ENCODE measurements at regions of chrX and their contacts with region 1.

Region 1: DNA sequence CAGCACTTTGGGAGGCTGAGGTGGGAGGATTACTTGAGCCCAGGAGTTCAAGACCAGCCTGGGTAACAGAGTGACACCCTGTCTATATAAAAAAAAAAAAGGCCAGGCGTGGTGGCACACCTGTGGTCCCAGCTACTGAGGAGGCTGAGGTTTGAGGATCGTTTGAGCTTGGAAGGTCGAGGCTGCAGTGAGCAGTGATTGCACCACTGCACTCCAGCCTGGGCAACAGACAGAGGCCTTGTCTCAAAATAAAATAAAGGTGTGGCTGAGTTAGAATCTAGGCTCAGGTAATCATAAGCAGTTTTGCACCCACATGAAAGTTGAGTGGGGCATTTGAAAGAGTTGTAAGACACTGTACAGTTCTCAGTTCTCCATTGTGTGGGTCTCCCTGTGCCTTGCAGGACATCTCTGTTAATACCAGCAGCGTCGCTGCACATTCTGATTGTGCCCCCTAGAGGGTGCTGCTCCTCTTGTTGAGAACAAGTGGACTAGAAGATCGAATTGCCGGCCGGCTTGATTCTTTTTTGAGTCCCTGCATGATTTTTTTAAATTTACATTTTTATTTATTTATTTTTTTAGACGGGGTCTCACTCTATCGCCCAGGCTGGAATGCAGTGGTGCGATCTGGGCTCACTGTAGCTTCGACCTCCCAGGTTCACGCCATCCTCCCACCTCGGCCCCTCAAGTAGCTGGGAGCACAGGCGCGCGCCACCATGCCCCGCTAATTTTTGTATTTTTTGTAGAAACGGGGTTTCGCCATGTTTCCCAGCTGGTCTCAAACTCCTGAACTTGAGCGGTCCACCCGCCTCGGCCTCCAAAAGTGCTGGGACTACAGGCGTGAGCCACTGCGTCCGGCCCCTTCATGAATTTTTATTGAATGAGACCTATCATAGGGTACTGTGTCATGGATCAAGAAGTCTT is 73.6 kb upstream of the RBMX start:
- DNase-seq: no peak
- H3K4me3 ChIP-seq: no peak overlapping the region
- H3K27ac ChIP-seq: no peak overlapping the region
- H3K4me1 ChIP-seq: no peaks in the 10 kb centered on the region
- H3K27me3 ChIP-seq: peaks cover 0 to 3% (median 0%) of the 10 kb centered on the region in 4 donors
- CTCF ChIP-seq: peak; percentile 35 to 62 (median 50)
- EP300 ChIP-seq: no peak
- POLR2A ChIP-seq: no peak

Region 2: GRCh38 chrX:137040976-137041728 is 87.0 kb after region 1 on chrX:
- intact Hi-C with region 1: loop called (anchors 10 kb)
- DNase-seq: no peak
- H3K4me3 ChIP-seq: no peak overlapping the region
- H3K27ac ChIP-seq: no peak overlapping the region
- H3K4me1 ChIP-seq: no peaks in the 10 kb centered on the region
- H3K27me3 ChIP-seq: no peaks in the 10 kb centered on the region
- CTCF ChIP-seq: no peak
- EP300 ChIP-seq: no peak
- POLR2A ChIP-seq: no peak

Region 3: GRCh38 chrX:137166591-137166990 is 212.5 kb after region 1 on chrX:
- intact Hi-C with region 1: no loop called
- DNase-seq: no peak
- H3K4me3 ChIP-seq: no peak overlapping the region
- H3K27ac ChIP-seq: no peak overlapping the region
- H3K4me1 ChIP-seq: no peaks in the 10 kb centered on the region
- H3K27me3 ChIP-seq: no peaks in the 10 kb centered on the region
- CTCF ChIP-seq: no peak
- EP300 ChIP-seq: no peak
- POLR2A ChIP-seq: no peak

Measured in esophagus muscularis mucosa (tissue), 4 donors.